GM10248 (cell line): ENCODE measurements at regions of chr1 and their contacts with region 1.

Region 1: DNA sequence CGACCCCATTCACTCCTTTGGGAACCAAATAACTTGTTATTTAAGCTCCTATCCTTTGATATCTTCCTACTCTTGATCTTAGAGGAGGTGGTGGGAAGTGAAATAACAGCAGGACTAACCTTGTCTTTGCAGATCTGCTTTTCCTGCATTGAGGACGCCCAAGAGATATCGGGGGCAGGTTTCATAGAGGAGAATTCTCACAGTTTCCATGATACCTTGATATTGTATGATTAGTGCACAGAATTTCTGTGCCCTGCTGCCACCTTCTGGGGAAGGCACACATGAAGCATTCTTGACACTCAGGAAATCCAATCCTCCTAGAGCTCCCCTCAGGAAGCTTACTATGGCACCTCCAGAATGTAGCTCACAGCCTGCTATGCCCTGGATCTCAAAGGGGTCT is 1.6 kb downstream of the CD1B start:
- DNase-seq: peak; percentile 51
- CTCF ChIP-seq: peak; percentile 53

Region 2: DNA sequence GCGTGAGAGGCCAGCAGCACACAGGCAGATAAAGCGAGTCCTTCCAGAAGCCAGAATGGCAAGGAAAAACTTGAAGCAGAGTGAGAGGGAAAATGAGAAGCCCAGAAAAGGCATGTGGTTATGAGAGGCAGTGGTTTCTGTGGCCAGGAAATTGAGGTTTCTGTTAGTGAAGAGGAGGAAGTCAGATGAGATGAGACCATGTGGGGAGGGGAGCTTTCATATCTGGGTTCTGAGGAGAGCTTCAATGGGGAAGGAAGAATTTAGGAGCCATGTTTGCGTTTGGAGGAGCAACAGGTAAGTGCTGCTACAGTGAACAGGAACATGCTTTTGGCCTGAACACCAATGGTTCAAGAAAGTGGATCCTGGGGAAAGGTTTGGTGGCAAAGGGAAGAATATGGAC is 81.6 kb before region 1 on chr1:
- CTCF ChIA-PET with region 1: interaction called, 20 read pairs
- POLR2A ChIA-PET with region 1: no interaction called
- DNase-seq: peak; percentile 44
- CTCF ChIP-seq: no peak